ENCODE measurements at regions of chr9 and their contacts with region 1.

Region 1: GRCh38 chr9:4740638-4741364 is at the start of gene AK3:
- DNase-seq: peak; percentile 79
- H3K4me3 ChIP-seq: peak within 1 kb of the TSS; percentile 76 to 82 (median 80)
- H3K27ac ChIP-seq: peak within 1 kb of the TSS; percentile 73
- H3K4me1 ChIP-seq: peaks cover 37% of the 10 kb centered on the region
- H3K27me3 ChIP-seq: no peaks in the 10 kb centered on the region
- CTCF ChIP-seq: peak in 1 of 2 donors; percentile 41
- total RNA-seq, gene AK3: 36.5 to 73.3 TPM

Region 2: DNA sequence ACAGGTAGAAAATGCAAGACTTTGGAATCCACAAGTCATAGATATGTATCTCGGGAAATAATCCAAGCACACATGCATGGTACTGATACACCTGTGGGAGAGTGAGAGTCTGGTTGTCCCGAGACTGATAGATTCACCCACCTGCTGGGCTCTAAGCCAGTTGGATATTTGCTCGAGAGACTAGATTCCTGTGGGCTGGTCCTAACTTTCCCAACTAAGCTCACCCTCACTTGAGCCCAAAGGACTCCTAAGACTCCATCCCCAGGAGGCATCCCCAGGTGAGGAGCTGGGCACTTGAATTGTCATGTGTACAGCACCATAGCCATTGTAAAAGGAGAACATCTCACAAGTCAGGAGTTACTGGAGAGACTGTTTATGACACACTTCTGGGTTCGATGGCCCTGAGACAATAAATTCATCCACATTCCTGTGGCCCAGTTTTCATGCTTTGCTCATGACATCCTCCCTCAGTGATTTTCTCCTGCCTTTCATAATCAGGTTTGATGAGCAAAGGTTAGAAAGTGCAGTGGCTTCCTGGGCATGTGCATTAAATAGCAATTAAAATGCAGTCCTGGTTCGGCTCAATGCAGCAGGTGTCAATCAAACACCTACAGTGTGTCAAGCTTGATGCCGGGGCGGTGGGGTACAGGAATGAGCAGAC is 232.4 kb before region 1 on chr9:
- CTCF ChIA-PET with region 1: no interaction called
- dilution Hi-C with region 1: no loop called
- in situ Hi-C with region 1: no loop called
- intact Hi-C with region 1: loop called (anchors 10 kb)
- DNase-seq: peak; percentile 81
- H3K4me3 ChIP-seq: no peak overlapping the region
- H3K27ac ChIP-seq: no peak overlapping the region
- H3K4me1 ChIP-seq: peaks cover 9% of the 10 kb centered on the region
- H3K27me3 ChIP-seq: no peaks in the 10 kb centered on the region
- CTCF ChIP-seq: no peak

Region 3: DNA sequence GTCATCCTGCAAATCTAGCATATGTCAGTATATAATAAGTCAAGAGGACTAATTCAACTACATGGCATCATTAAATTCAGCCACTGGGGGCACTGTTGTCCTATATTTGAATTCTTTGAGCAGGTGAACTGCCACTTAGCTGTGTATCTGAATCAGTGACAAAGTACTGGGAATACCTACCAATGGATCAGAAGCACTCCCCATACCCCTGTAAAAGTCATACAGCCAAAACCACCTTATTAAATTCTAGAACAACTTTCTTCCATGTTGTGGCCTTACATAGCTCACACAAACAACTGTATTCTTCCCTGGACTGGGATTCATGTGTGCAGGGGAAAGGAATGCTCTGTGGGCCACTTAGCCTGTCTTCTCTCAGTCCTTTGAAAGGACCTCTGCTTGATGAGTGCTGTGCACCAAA is 136.1 kb before region 1 on chr9:
- CTCF ChIA-PET with region 1: no interaction called
- dilution Hi-C with region 1: no loop called
- in situ Hi-C with region 1: no loop called
- intact Hi-C with region 1: loop called (anchors 5 kb)
- DNase-seq: peak; percentile 57
- H3K4me3 ChIP-seq: no peak overlapping the region
- H3K27ac ChIP-seq: no peak overlapping the region
- H3K4me1 ChIP-seq: no peaks in the 10 kb centered on the region
- H3K27me3 ChIP-seq: no peaks in the 10 kb centered on the region
- CTCF ChIP-seq: peak; percentile 54 to 56

Region 4: DNA sequence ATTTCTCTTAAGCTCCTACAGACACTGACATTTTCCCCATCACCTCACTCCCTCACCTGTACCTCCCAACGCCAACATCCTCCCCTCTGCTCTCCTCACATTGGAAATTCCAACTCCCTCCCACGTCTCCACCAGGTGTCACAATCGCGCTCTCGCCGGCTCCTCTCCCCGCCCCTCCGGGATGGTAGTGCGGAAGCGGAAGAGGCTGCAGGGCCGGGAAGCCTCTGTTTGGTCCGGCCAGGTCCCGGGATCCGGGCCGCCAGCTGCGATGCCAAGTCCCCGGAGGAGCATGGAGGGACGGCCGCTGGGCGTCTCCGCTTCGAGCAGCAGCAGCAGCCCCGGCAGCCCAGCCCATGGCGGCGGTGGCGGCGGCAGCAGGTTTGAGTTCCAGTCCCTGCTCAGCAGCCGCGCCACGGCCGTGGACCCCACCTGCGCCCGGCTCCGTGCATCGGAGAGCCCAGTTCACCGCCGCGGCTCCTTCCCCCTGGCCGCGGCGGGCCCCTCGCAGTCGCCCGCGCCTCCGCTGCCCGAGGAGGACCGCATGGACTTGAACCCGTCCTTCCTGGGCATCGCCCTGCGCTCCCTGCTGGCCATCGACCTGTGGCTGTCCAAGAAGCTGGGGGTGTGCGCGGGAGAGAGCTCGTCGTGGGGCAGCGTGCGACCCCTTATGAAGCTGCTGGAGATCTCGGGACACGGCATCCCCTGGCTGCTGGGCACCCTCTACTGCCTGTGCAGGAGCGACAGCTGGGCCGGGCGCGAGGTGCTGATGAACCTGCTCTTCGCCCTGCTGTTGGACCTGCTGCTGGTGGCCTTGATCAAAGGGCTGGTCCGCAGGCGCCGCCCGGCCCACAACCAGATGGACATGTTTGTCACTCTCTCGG is 78.5 kb before region 1 on chr9 and contains the start of gene PLPP6:
- CTCF ChIA-PET with region 1: no interaction called
- dilution Hi-C with region 1: no loop called
- in situ Hi-C with region 1: no loop called
- intact Hi-C with region 1: loop called (anchors 1 kb)
- DNase-seq: peak; percentile 95
- H3K4me3 ChIP-seq: peak within 1 kb of the TSS; percentile 76 to 92 (median 87)
- H3K27ac ChIP-seq: peak within 1 kb of the TSS; percentile 60
- H3K4me1 ChIP-seq: peaks cover 49% of the 10 kb centered on the region
- H3K27me3 ChIP-seq: no peaks in the 10 kb centered on the region
- CTCF ChIP-seq: peak in 1 of 2 donors; percentile 56
- total RNA-seq, gene PLPP6: 10.9 to 12.0 TPM

Region 5: DNA sequence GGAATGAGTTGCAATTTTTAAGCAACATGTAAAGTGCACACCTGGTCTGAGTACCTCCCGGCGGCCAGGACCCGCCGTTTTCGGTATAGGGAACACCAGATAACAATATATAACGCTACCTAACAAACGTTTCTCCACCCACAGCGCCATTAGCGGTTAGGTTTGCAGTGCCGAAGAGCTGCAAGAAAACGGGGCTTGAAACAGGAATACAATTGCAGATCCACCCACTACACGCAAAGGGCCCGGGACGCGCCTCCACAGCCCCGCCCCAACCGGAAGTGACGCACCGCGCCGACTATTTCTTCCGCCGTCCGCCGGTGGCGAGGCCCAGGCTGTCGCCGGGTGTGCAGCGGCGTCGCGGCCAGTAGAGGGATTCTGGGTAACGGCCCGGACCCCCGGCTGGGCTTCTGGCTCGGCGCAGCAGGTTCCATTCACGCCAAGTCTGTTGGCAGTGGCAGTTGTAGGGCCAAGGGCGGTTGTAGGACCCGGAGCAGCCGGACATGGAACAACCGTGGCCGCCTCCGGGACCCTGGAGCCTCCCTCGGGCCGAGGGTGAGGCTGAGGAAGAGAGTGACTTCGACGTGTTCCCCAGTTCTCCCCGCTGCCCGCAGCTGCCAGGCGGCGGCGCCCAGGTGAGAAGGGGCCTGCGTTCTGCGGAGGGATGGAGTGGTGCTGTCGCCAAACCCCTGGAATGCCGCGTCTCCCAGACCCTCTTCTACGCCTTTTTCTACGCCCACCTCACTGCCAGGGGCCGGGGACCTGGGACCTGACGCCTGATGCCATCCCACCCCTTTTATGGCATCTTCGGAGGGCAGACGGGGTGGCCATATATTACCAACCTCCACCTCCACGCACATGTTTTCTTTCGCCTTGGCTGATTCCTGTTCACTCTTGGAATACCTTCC is 61.3 kb before region 1 on chr9 and contains the start of gene CDC37L1:
- CTCF ChIA-PET with region 1: interaction called, 3 read pairs
- dilution Hi-C with region 1: no loop called
- in situ Hi-C with region 1: no loop called
- intact Hi-C with region 1: loop called (anchors 1 kb)
- DNase-seq: peak; percentile 94
- H3K4me3 ChIP-seq: peak within 1 kb of the TSS; percentile 76 to 83 (median 82)
- H3K27ac ChIP-seq: peak within 1 kb of the TSS; percentile 87
- H3K4me1 ChIP-seq: peaks cover 10% of the 10 kb centered on the region
- H3K27me3 ChIP-seq: no peaks in the 10 kb centered on the region
- CTCF ChIP-seq: peak; percentile 32 to 65
- total RNA-seq, gene CDC37L1: 19.0 to 20.2 TPM

Measured in mammary epithelial cell (primary cell).